Heart right ventricle (tissue), 16 donors: ENCODE measurements at regions of chr15 and their contacts with region 1.

Region 1: GRCh38 chr15:99961011-99961441 is 227.8 kb upstream of the LYSMD4 start:
- DNase-seq: peak in 1 of 2 donors; percentile 22
- ATAC-seq: peak; percentile 40 to 81 (median 66)
- H3K4me3 ChIP-seq: no peak overlapping the region
- H3K27ac ChIP-seq: no peak overlapping the region
- H3K4me1 ChIP-seq: no peaks in the 10 kb centered on the region
- H3K27me3 ChIP-seq: peaks cover 0 to 20% (median 4%) of the 10 kb centered on the region in 7 donors
- CTCF ChIP-seq: peak in 7 of 9 donors; percentile 40 to 64 (median 56)

Region 2: GRCh38 chr15:100101426-100102089 is 140.5 kb after region 1 on chr15:
- intact Hi-C with region 1: no loop called
- DNase-seq: peak in 1 of 2 donors; percentile 37
- ATAC-seq: peak in 7 of 8 donors; percentile 61 to 83 (median 80)
- H3K4me3 ChIP-seq: no peak overlapping the region
- H3K27ac ChIP-seq: peak overlapping the region in 3 of 10 donors; percentile 16 to 39 (median 34)
- H3K4me1 ChIP-seq: peaks cover 0 to under 1% (median 0%) of the 10 kb centered on the region in 9 donors
- H3K27me3 ChIP-seq: no peaks in the 10 kb centered on the region
- CTCF ChIP-seq: no peak

Region 3: GRCh38 chr15:100125401-100126191 is 164.6 kb after region 1 on chr15:
- intact Hi-C with region 1: loop called in 5 of 10 experiments (anchors 5 to 10 kb)
- DNase-seq: peak; percentile 39 to 74
- ATAC-seq: peak; percentile 76 to 93 (median 86)
- H3K4me3 ChIP-seq: no peak overlapping the region
- H3K27ac ChIP-seq: peak overlapping the region in 7 of 10 donors; percentile 25 to 55 (median 41)
- H3K4me1 ChIP-seq: peaks cover 0 to 14% (median 4%) of the 10 kb centered on the region in 9 donors
- H3K27me3 ChIP-seq: no peaks in the 10 kb centered on the region
- CTCF ChIP-seq: no peak

Region 4: GRCh38 chr15:100131321-100132224 is 170.5 kb after region 1 on chr15:
- intact Hi-C with region 1: loop called in 5 of 10 experiments (anchors 5 to 10 kb)
- DNase-seq: peak; percentile 69 to 77
- ATAC-seq: peak; percentile 87 to 97 (median 91)
- H3K4me3 ChIP-seq: peak overlapping the region in 9 of 10 donors; percentile 15 to 47 (median 26)
- H3K27ac ChIP-seq: peak overlapping the region in 8 of 10 donors; percentile 9 to 55 (median 45)
- H3K4me1 ChIP-seq: peaks cover 0 to 11% (median 0%) of the 10 kb centered on the region in 9 donors
- H3K27me3 ChIP-seq: no peaks in the 10 kb centered on the region
- CTCF ChIP-seq: peak; percentile 27 to 76 (median 61)

Region 5: GRCh38 chr15:100159436-100159835 is 198.4 kb after region 1 on chr15:
- intact Hi-C with region 1: loop called in 1 of 10 experiments (anchors 10 kb)
- DNase-seq: no peak
- ATAC-seq: no peak
- H3K4me3 ChIP-seq: no peak overlapping the region
- H3K27ac ChIP-seq: no peak overlapping the region
- H3K4me1 ChIP-seq: no peaks in the 10 kb centered on the region
- H3K27me3 ChIP-seq: no peaks in the 10 kb centered on the region
- CTCF ChIP-seq: peak in 5 of 9 donors; percentile 9 to 46 (median 27)